HAP-1 (cell line): ENCODE measurements at regions of chr14 and their contacts with region 1.

Region 1: GRCh38 chr14:34322940-34323418 is 139.1 kb downstream of the SPTSSA start:
- DNase-seq: peak; percentile 56 to 85
- H3K4me3 ChIP-seq: no peak overlapping the region
- H3K4me1 ChIP-seq: peaks cover 5% of the 10 kb centered on the region; the same call in 1 of the 2 replicates
- H3K27me3 ChIP-seq: no peaks in the 10 kb centered on the region; the same call in none of the 2 replicates

Region 2: DNA sequence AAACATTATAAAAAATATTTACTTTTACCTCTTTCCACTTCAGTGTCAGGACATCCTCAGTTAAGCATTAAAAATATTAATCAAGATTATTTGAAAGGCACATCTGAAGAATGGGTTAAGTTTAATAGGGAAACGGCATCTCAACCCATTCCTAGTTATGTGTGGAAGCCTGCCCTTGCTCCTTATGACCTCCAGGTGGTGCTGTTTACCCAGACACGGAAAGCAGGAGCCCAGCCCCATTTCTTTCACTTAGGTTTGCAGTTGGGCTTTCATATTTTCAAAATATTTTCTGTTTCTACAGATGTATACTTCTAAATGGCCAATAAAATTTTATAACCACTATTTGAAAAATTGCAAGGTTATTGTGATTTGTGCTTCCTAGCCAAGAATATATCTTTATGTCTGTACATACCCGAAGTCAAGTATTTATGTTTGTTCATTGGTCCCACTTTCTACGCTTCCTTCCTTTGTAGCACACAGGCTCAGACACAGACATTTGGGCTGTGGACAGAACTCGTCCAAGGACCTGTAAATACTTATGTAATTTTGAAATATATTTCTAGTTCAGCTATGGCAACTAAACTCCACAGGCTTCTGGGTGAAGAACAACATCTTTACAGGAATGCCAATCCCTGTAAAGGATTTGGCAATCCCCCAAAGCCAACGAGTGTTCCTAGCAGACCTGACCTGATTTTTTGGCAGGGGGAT is 1746.7 kb before region 1 on chr14:
- in situ Hi-C with region 1: loop called (anchors 25 kb)
- DNase-seq: peak; percentile 62 to 63
- H3K4me3 ChIP-seq: no peak overlapping the region
- H3K4me1 ChIP-seq: no peaks in the 10 kb centered on the region
- H3K27me3 ChIP-seq: 0 out of 2 replicates have a peak, but pooled peaks cover 10% of the 10 kb centered on the region

Region 3: GRCh38 chr14:34522496-34522895 is 199.5 kb after region 1 on chr14:
- in situ Hi-C with region 1: no loop called
- DNase-seq: no peak
- H3K4me3 ChIP-seq: no peak overlapping the region
- H3K4me1 ChIP-seq: no peaks in the 10 kb centered on the region
- H3K27me3 ChIP-seq: no peaks in the 10 kb centered on the region